Right ventricle myocardium superior (tissue), 1 donor: ENCODE measurements at regions of chr22 and their contacts with region 1.

Region 1: DNA sequence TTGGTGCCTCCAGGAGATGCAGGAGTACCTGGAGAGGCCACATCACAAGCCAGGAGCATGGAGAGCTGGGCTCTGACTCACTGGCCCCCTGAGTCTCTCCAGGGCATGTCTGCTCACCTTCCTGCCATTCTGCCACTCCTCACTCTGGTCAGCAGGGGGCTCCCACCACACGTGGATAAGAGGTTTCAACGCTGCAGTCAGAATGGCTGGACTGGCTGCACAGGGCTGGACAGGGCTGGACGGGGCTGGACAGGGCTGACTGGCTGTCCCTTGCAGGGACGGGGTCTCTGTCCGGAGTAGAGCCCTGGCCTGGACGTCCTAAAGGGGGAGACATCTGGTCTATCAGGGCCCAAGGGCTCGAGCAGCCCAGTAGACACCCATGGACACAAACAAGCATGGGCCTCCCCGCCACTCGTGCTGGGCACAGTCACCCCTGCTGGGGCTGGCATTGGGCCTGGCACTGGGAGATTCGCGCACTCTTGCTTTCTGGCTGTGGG is 34.6 kb downstream of the CYTH4 start:
- DNase-seq: peak; percentile 77
- ATAC-seq: peak; percentile 89

Region 2: DNA sequence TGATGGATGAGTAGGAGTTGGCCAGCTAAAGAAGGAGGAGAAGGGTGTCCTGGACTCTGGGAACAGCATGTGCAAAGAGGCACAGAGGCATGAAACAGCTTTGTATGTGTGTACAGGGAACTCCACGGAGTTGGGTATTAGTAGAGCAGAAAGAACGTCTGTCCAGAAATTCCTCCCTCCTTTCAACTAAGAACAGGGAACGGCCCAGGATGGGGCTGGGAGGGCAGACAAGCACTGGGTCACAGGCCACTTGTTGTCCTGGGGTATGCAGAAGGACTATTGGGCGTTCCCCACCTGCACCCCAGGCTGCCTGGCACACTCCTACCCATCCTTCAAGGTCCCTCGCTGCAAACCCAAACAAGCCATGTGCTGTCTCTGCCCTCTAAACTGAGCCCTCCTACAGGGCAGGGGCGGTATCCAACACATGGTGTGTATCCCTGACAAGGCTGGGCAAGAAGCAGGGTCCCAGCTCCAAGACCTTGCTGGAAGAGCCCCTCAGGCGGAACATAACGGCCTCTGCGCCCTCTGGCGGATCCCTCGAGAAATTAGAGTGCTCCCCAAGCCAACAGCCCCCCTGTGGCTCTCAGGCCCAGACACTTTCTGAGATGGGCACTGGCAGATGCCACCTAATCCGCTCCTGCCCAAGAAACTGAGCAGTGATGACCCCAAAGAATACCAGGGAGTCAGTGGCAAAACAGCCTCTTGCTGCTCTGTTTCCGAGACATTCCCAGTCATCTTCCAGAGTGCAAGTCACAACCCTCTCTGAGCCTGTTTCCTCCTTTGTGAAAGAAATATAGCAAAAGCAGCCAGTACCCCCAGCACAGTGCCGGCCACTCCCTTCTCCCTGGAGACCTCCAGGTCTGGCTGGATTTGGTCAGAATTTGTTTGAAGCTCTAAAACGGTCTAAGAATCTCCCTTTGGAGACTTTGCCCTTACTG is 112.0 kb after region 1 on chr22:
- intact Hi-C with region 1: loop called (anchors 10 kb)
- DNase-seq: peak; percentile 61
- ATAC-seq: peak; percentile 68

Region 3: GRCh38 chr22:37457093-37457893 is 140.4 kb after region 1 on chr22:
- intact Hi-C with region 1: loop called (anchors 2 kb)
- DNase-seq: peak; percentile 77
- ATAC-seq: peak; percentile 82

Region 4: GRCh38 chr22:37498289-37498909 is 181.5 kb after region 1 on chr22:
- intact Hi-C with region 1: no loop called
- DNase-seq: no peak
- ATAC-seq: no peak

Region 5: GRCh38 chr22:37566903-37567820 is 250.2 kb after region 1 on chr22:
- intact Hi-C with region 1: loop called (anchors 10 kb)
- DNase-seq: peak; percentile 90
- ATAC-seq: peak; percentile 73